Mammary epithelial cell (primary cell): ENCODE measurements at regions of chr20 and their contacts with region 1.

Region 1: DNA sequence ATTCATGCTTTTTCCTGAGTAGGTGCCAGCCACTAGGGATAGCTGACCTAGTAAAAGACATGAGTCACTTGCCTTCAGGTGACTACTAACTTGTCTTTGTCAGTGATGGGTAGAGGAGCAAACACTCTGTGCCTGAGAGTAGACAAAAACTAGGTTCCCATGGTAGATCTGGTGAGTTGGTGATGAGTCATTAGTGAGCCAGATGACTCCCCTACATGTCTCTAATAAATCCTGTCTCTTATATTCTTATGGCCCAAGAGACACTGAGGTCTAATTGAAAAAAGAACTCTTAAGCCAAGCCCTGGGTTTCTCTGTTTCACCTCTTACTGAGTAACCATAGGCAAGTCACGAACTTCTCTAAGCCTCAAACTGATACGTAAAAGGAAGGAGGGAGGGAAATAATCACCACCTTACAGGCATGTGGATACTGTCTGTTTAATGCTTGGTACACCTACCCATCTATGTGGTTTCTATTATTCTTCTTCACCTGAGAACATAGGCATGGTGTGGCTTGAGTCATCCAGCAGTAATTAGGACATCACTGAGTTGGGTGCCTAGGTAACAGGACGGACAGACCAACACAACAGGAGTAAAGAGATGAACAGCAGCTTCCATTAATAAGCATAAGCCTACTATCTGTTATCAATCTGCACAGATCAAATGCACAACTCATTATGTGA is 20.3 kb downstream of the TTPAL start:
- DNase-seq: peak; percentile 99
- H3K4me3 ChIP-seq: no peak overlapping the region
- H3K27ac ChIP-seq: peak overlapping the region; percentile 100
- H3K4me1 ChIP-seq: peaks cover 41% of the 10 kb centered on the region
- H3K27me3 ChIP-seq: no peaks in the 10 kb centered on the region
- CTCF ChIP-seq: no peak

Region 2: GRCh38 chr20:44370639-44371220 is 125.2 kb before region 1 on chr20:
- CTCF ChIA-PET with region 1: no interaction called
- dilution Hi-C with region 1: no loop called
- in situ Hi-C with region 1: no loop called
- intact Hi-C with region 1: no loop called
- DNase-seq: no peak
- H3K4me3 ChIP-seq: no peak overlapping the region
- H3K27ac ChIP-seq: no peak overlapping the region
- H3K4me1 ChIP-seq: no peaks in the 10 kb centered on the region
- H3K27me3 ChIP-seq: peaks cover 4% of the 10 kb centered on the region
- CTCF ChIP-seq: no peak

Region 3: DNA sequence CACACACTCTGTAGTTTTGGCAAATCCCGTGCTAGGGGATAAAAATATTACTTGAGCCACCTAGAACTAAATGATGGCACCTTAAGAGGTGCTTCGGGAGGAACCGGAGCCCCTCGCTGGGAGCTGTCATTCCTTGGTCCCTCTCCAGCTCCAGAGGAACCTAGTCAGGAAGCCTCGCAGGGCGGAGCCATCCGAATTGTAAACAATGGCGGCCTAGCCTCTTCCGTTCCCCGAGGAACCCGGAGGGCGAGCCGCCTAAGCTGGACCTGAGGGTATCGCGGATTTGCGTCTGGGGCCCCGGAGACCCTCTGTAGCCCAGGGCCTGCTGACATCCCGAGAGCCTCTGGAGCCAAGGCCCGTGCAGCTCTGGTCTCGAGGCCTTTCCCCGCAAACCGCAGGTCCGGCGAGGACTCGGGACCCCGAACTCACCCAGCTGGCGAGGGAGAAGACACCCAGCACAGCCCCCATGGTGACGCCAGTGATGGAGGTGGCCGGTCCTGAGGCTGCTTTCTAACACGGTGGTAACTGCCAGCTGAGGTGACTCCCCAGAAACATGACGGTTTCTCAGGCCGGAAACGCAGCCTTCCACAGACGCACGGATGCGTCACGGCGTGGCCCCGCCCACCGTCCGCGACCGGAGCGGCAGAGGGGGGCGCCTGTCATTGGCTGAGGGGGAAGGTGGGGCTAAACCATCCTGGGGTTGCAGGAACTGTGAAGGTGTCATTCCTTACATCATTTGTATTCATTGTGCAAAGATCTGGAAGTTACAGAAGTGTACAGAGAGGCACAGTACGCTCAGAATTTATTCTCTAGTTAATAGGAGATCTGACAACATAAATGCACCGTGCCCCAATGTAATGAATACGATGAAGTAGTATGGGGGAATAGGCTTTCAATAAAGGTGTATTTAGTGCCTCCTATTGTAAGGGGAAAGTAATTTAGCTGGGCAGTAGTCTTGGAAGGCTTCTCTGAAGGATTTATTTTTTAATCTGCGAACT is 25.8 kb after region 1 on chr20 and contains the start of gene SERINC3:
- CTCF ChIA-PET with region 1: no interaction called
- dilution Hi-C with region 1: no loop called
- in situ Hi-C with region 1: no loop called
- intact Hi-C with region 1: loop called (anchors 1 kb)
- DNase-seq: peak; percentile 96
- H3K4me3 ChIP-seq: peak within 1 kb of the TSS; percentile 95 to 99 (median 99)
- H3K27ac ChIP-seq: peak within 1 kb of the TSS; percentile 99
- H3K4me1 ChIP-seq: peaks cover 32% of the 10 kb centered on the region
- H3K27me3 ChIP-seq: no peaks in the 10 kb centered on the region
- CTCF ChIP-seq: peak in 1 of 2 donors; percentile 33
- total RNA-seq, gene SERINC3: 101 to 153 TPM

Region 4: DNA sequence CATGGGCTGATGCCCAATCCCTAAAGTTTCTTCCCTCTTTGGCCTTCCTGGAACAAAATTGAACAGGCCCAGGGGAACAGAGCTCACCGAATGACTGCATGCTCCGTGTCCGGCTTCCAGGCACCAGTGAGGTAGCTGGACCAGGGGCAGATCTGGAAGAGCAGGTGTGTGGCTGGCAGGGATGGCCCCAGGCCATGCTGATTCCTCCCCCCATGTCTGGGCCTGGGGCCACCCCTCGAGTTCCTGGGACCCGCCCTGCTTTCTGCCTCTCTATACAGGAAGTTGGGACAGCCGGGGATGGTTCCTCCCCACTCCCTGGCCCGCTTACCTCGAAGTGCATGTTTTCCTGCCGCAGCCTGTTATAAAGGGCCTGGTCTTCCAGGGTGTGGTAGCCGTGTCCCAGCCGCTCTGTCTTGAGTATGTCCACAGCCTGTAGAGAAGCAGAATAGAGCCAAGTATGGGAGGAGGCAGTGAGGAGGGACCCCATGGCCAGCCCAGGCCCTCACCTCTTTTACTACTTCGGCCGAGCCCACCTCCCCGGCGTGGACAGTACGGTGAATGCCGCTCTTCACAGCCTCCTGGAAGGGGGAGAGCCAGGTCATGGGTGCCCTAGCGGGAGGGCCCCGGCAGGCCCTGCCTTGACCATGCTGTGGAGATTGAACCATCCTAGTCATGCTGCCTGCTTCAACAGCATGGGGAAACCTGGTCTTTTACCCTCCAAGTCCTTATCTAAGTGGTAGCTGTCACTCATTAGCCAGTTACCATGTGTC is 126.7 kb after region 1 on chr20:
- CTCF ChIA-PET with region 1: no interaction called
- dilution Hi-C with region 1: no loop called
- in situ Hi-C with region 1: no loop called
- intact Hi-C with region 1: no loop called
- DNase-seq: no peak
- H3K4me3 ChIP-seq: no peak overlapping the region
- H3K27ac ChIP-seq: no peak overlapping the region
- H3K4me1 ChIP-seq: peaks cover 10% of the 10 kb centered on the region
- H3K27me3 ChIP-seq: no peaks in the 10 kb centered on the region
- CTCF ChIP-seq: no peak